Activated CD4-positive, alpha-beta T cell treated with anti-CD3 and anti-CD28 coated beads for 36 hours (primary cell): ENCODE measurements at regions of chr15 and their contacts with region 1.

Region 1: GRCh38 chr15:44918136-44918535 is 38.4 kb upstream of the TERB2 start:
- DNase-seq: no peak
- ATAC-seq: no peak
- H3K4me3 Mint-ChIP-seq: no peak overlapping the region
- H3K27ac Mint-ChIP-seq: no peak overlapping the region
- H3K4me1 Mint-ChIP-seq: no peaks in the 10 kb centered on the region
- H3K27me3 Mint-ChIP-seq: no peaks in the 10 kb centered on the region

Region 2: DNA sequence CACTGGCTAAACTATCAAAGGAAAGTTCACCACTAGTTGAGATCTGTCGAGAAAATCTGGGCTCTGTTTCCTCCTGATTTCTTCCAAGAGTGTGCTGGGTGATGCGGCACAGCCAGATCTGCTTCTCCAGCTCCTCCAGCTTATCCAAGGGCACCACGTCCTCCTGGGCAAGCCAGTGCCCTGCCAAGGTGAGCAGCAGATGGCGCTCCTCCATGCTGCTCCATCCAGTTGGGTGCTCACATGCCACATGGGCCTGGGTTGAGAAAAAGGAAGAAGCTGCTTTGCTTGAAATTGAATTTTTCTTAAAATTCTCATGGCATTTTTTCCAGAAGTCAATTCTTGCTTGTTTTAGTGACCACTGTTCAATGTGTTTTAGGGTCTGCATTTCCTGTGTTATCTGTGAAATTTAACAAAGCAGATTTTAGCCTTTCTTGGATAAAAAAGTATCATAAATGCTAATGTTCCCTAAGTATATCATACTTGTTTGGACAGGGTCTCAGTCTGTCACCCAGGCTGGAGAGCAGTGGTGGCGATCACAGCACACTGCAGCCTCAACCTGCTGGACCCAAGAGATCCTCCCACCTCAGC is 333.9 kb before region 1 on chr15:
- CTCF ChIA-PET with region 1: no interaction called
- POLR2A ChIA-PET with region 1: no interaction called
- intact Hi-C with region 1: loop called in 1 of 2 experiments (anchors 5 kb)
- DNase-seq: peak; percentile 81
- ATAC-seq: peak; percentile 97
- H3K4me3 Mint-ChIP-seq: no peak overlapping the region
- H3K27ac Mint-ChIP-seq: no peak overlapping the region
- H3K4me1 Mint-ChIP-seq: peaks cover 6% of the 10 kb centered on the region
- H3K27me3 Mint-ChIP-seq: no peaks in the 10 kb centered on the region

Region 3: DNA sequence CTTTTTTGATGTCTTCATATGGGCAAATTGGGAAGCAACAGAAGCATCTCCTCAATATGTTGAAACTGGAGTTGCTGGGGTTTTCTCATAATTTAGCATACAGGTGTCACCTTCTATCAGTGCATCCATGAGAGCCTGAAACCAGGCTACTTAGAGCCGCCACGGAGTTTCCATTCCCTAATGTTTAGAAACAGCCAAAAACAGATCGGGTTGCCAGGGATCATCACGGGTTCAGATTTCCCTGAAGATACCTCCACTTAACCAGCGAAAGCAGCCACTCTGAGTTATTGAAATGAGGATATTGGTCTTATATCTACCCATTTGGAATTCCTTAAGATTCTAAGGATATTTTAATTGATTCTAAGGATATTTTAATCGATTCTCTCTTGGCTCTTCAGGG is 52.9 kb after region 1 on chr15:
- CTCF ChIA-PET with region 1: no interaction called
- POLR2A ChIA-PET with region 1: no interaction called
- intact Hi-C with region 1: loop called in 1 of 2 experiments (anchors 2 kb)
- DNase-seq: no peak
- ATAC-seq: no peak
- H3K4me3 Mint-ChIP-seq: no peak overlapping the region
- H3K27ac Mint-ChIP-seq: no peak overlapping the region
- H3K4me1 Mint-ChIP-seq: no peaks in the 10 kb centered on the region
- H3K27me3 Mint-ChIP-seq: no peaks in the 10 kb centered on the region

Region 4: DNA sequence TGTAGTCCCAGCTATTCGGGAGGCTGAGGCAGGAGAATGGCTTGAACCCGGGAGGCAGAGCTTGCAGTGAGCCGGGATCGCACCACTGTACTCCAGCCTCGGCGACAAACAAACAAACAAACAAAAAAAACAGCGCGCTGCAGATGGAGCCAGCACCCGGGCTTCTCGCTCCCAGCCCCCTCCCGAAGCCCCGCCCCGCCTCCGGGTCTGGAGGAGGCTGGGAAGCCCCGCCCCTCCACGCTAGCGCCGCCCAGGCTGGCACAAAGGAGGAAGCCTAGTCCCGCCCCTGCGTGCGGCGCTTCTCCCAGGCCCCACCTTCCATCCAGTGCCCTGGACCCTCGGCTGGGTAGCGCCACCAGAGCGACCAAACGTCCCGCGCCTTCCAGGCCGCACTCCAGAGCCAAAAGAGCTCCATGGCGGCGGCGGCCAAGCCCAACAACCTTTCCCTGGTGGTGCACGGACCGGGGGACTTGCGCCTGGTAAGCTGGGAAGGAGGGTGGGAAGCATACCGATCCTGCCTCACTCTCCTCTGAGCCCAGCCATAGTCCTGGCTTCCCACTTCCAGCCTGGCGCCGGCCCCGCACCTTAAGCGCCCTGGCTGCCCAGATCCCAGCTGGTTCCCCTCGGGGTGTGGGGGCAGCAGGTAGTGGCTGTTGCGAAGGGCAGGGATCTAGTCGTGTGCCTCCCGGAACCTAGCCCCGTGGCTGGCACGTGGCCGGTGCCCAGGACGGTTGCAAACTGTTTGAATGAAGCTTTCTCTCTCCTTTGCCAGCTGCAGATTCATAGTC is 104.9 kb after region 1 on chr15 and contains the start of gene SORD:
- CTCF ChIA-PET with region 1: no interaction called
- POLR2A ChIA-PET with region 1: no interaction called
- intact Hi-C with region 1: loop called in 1 of 2 experiments (anchors 5 kb)
- DNase-seq: peak; percentile 96
- ATAC-seq: peak; percentile 99
- H3K4me3 Mint-ChIP-seq: peak within 1 kb of the TSS; percentile 83
- H3K27ac Mint-ChIP-seq: peak within 1 kb of the TSS; percentile 74
- H3K4me1 Mint-ChIP-seq: peaks cover 23% of the 10 kb centered on the region
- H3K27me3 Mint-ChIP-seq: peaks cover 16% of the 10 kb centered on the region
- total RNA-seq, gene SORD: 17.1 to 17.7 TPM